Panc1 (cell line): ENCODE measurements at regions of chr2 and their contacts with region 1.

Region 1: DNA sequence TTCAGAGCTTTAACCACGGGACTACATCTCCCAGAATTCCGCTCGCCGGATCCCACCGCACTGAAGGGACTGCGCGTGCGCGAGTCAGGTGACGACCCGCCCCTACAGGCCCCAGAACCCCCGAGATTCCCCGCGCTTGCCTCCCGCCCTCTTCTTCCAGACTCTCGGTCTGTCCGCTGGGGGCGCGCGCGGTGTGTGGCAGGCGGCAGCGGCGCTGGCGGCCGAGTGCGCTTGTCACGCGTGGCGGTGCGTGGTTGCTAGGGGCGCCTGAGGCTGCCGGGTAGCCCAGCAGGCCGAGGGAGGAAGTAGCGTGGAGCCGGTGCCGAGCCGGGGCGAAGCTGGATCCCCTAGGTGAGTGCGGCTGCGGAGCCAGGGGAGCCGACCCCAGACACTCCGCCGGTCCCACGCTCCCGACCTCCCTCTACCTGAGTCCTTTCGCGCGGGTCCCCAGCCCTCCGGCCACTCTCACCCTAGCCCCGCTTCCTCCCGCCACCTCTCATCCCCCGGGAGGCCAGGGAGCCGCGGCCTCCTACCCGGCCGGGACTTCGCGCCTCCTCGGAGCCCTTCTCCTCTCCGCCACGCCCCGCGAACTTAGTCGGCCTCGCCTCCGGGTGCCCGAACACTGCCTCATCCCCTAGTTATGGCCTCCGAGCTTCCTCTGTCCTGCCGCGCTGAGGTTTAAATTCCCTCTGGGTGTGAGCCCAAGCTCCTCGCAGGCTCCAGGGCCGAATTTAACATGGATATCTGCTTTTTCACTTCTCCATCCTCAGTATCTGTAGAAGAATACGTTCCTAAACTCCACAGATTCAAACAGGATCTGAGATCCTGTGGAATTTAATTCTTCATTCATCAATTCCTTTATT is at the start of gene TTLL4:
- DNase-seq: peak; percentile 77
- ATAC-seq: peak; percentile 98
- H3K4me3 ChIP-seq: peak within 1 kb of the TSS; percentile 72 to 87
- H3K27ac ChIP-seq: peak within 1 kb of the TSS; percentile 92
- H3K4me1 ChIP-seq: peaks cover 8% of the 10 kb centered on the region
- H3K27me3 ChIP-seq: no peaks in the 10 kb centered on the region
- CTCF ChIP-seq: peak; percentile 97
- total RNA-seq, gene TTLL4: 45.6 TPM

Region 2: GRCh38 chr2:218995972-218996711 is 285.2 kb after region 1 on chr2:
- CTCF ChIA-PET with region 1: interaction called, 11 read pairs
- POLR2A ChIA-PET with region 1: no interaction called
- in situ Hi-C with region 1: no loop called
- intact Hi-C with region 1: no loop called
- DNase-seq: peak; percentile 41
- ATAC-seq: peak; percentile 95
- H3K4me3 ChIP-seq: peak overlapping the region; percentile 51 to 62
- H3K27ac ChIP-seq: peak overlapping the region; percentile 48; the same call in 1 of the 2 replicates
- H3K4me1 ChIP-seq: peaks cover 4% of the 10 kb centered on the region; the same call in 1 of the 2 replicates
- H3K27me3 ChIP-seq: peaks cover 2% of the 10 kb centered on the region; the same call in 1 of the 2 replicates
- CTCF ChIP-seq: peak; percentile 96